ENCODE measurements at regions of chr21 and their contacts with region 1.

Region 1: GRCh38 chr21:43775795-43776430 is at the start of gene CSTB:
- DNase-seq: peak; percentile 90
- H3K4me3 ChIP-seq: peak within 1 kb of the TSS; percentile 50 to 97 (median 80)
- H3K27ac ChIP-seq: peak within 1 kb of the TSS; percentile 82 to 93 (median 91)
- H3K4me1 ChIP-seq: peaks cover 0 to 21% (median 13%) of the 10 kb centered on the region in 4 donors
- H3K27me3 ChIP-seq: no peaks in the 10 kb centered on the region
- CTCF ChIP-seq: no peak
- EP300 ChIP-seq: no peak
- POLR2A ChIP-seq: peak; percentile 36 to 39
- total RNA-seq, gene CSTB: 7.1 to 9.7 (median 7.8) TPM

Region 2: DNA sequence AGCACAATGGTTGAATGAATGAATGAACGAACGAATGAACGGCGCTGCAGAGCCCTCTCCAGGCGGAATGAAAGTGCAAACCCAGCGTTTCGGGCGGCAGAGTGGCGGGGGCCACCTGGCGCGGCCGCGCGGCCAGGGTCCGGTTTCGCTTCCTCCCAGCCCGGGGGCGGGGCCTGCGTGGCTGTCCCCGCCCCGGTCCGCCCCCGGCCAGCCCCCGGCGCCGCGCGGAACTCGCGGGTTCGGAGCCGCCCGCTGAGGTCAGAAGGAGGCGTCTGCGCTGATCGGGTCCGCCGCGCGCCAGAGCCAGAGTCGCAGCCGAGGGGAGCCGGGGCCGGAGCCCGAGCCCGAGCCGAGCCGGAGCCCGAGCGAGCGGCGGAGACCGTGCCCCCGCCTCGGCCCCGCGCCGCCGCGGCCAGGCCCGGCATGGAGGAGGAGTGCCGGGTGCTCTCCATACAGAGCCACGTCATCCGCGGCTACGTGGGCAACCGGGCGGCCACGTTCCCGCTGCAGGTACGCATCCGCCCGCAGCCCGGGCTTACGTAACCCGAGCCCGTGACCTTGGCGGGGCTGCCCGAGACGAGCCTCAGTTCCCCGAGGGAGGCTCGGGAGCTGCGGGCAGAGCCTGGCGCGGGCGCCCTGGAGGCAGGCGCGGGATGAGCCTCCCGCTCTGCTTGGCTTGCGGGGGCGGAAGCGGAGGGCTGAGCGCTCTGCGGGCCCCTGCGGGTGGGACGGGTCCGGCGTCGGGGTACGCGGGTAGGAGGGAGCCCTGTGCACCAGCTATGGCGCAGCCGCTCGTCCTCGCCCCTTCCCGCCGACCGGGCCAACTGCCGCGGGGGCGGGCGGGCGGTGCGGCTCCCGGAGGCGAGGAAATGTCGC is 56.8 kb before region 1 on chr21 and contains the start of gene PDXK:
- intact Hi-C with region 1: loop called (anchors 2 kb)
- DNase-seq: peak; percentile 92
- H3K4me3 ChIP-seq: peak within 1 kb of the TSS; percentile 70 to 94 (median 72)
- H3K27ac ChIP-seq: peak within 1 kb of the TSS; percentile 81 to 86 (median 84)
- H3K4me1 ChIP-seq: peaks cover 0 to 35% (median 28%) of the 10 kb centered on the region in 4 donors
- H3K27me3 ChIP-seq: no peaks in the 10 kb centered on the region
- CTCF ChIP-seq: no peak
- EP300 ChIP-seq: no peak
- POLR2A ChIP-seq: no peak
- total RNA-seq, gene PDXK: 22.1 to 26.0 (median 23.9) TPM